CD8-positive, alpha-beta memory T cell (primary cell): ENCODE measurements at regions of chr3 and their contacts with region 1.

Region 1: DNA sequence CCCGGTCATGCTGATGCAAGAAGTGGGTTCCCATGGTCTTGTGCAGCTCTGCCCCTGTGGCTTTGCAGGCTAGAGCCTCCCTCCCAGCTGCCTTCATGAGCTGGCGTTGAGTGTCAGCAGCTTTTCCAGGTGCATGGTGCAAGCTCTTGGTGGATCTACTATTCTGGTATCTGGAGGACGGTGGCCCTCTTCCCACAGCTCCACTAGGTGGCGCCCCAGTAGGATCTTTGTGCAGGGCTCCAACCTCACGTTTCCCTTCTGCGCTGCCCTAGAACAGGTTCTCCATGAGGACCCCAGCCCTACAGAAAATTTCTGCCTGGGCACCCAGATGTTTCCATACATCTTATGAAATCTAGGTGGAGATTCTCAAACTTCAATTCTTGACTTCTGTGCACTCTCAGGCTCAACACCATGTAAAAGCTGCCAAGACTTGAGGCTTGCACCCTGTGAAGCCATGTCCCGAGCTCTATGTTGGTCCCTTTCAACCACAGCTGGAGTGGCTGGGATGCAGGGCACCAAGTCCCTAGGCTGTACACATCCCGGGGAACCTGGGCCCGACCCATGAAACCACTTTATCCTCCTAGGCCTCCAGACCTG is 238.4 kb upstream of the MDFIC2 start:
- DNase-seq: peak; percentile 38 to 73 (median 52)
- H3K4me3 ChIP-seq: no peak overlapping the region
- H3K4me3 Mint-ChIP-seq: no peak overlapping the region
- H3K27ac ChIP-seq: no peak overlapping the region
- H3K27ac Mint-ChIP-seq: no peak overlapping the region
- H3K4me1 ChIP-seq: no peaks in the 10 kb centered on the region
- H3K4me1 Mint-ChIP-seq: no peaks in the 10 kb centered on the region
- H3K27me3 ChIP-seq: no peaks in the 10 kb centered on the region
- H3K27me3 Mint-ChIP-seq: peaks cover 0 to 12% of the 10 kb centered on the region in 2 donors

Region 2: GRCh38 chr3:70580021-70580420 is 29.2 kb after region 1 on chr3:
- CTCF ChIA-PET with region 1: no interaction called
- POLR2A ChIA-PET with region 1: no interaction called
- DNase-seq: no peak
- H3K4me3 ChIP-seq: no peak overlapping the region
- H3K4me3 Mint-ChIP-seq: no peak overlapping the region
- H3K27ac ChIP-seq: no peak overlapping the region
- H3K27ac Mint-ChIP-seq: no peak overlapping the region
- H3K4me1 ChIP-seq: no peaks in the 10 kb centered on the region
- H3K4me1 Mint-ChIP-seq: no peaks in the 10 kb centered on the region
- H3K27me3 ChIP-seq: no peaks in the 10 kb centered on the region
- H3K27me3 Mint-ChIP-seq: peaks cover 6 to 40% of the 10 kb centered on the region in 2 donors

Region 3: GRCh38 chr3:71583566-71584449 is 1033.0 kb after region 1 on chr3 and contains the start of gene FOXP1:
- CTCF ChIA-PET with region 1: interaction called, 30 read pairs
- POLR2A ChIA-PET with region 1: interaction called, 3 read pairs
- DNase-seq: peak; percentile 44 to 76 (median 62)
- H3K4me3 ChIP-seq: peak within 1 kb of the TSS; percentile 91
- H3K4me3 Mint-ChIP-seq: peak within 1 kb of the TSS; percentile 81 to 98 (median 95)
- H3K27ac ChIP-seq: peak within 1 kb of the TSS; percentile 78
- H3K27ac Mint-ChIP-seq: peak within 1 kb of the TSS; percentile 87 to 98 (median 94)
- H3K4me1 ChIP-seq: peaks cover 26% of the 10 kb centered on the region
- H3K4me1 Mint-ChIP-seq: peaks cover 22 to 34% (median 33%) of the 10 kb centered on the region in 3 donors
- H3K27me3 ChIP-seq: no peaks in the 10 kb centered on the region
- H3K27me3 Mint-ChIP-seq: peaks cover 0 to 7% of the 10 kb centered on the region in 2 donors
- total RNA-seq, gene FOXP1: 142 to 147 TPM